ENCODE measurements at regions of chr10 and their contacts with region 1.

Region 1: GRCh38 chr10:72834183-72834825 is 59.2 kb upstream of the OIT3 start:
- DNase-seq: peak in 31 of 35 experiments; percentile 2 to 75 (median 21)
- ATAC-seq: peak in 3 of 4 experiments; percentile 50 to 66 (median 52)
- H3K4me3 ChIP-seq: no peak overlapping the region
- H3K4me3 Mint-ChIP-seq: no peak overlapping the region
- H3K27ac ChIP-seq: no peak overlapping the region
- H3K27ac Mint-ChIP-seq: no peak overlapping the region
- H3K4me1 ChIP-seq: no peaks in the 10 kb centered on the region
- H3K4me1 Mint-ChIP-seq: peaks cover 0 to 2% (median 2%) of the 10 kb centered on the region in 3 donors
- H3K27me3 ChIP-seq: no peaks in the 10 kb centered on the region
- H3K27me3 Mint-ChIP-seq: no peaks in the 10 kb centered on the region

Region 2: GRCh38 chr10:72364239-72364777 is 470.0 kb before region 1 on chr10:
- CTCF ChIA-PET with region 1: interaction called, 9 to 30 read pairs
- POLR2A ChIA-PET with region 1: interaction called, 3 to 5 read pairs
- DNase-seq: peak; percentile 67 to 91 (median 82)
- ATAC-seq: peak; percentile 98 to 99 (median 99)
- H3K4me3 ChIP-seq: peak overlapping the region in 1 of 2 donors; percentile 19
- H3K4me3 Mint-ChIP-seq: peak overlapping the region in 2 of 3 donors; percentile 25 to 56
- H3K27ac ChIP-seq: peak overlapping the region; percentile 63
- H3K27ac Mint-ChIP-seq: peak overlapping the region; percentile 80 to 91
- H3K4me1 ChIP-seq: peaks cover 0 to 23% of the 10 kb centered on the region in 2 experiments
- H3K4me1 Mint-ChIP-seq: peaks cover 15 to 21% (median 19%) of the 10 kb centered on the region in 3 donors
- H3K27me3 ChIP-seq: peaks cover 0 to 3% of the 10 kb centered on the region in 2 experiments
- H3K27me3 Mint-ChIP-seq: no peaks in the 10 kb centered on the region

Region 3: GRCh38 chr10:72875250-72876055 is 41.1 kb after region 1 on chr10:
- CTCF ChIA-PET with region 1: no interaction called
- POLR2A ChIA-PET with region 1: interaction called in 1 of 2 experiments, 14 read pairs
- DNase-seq: peak in 1 of 35 experiments; percentile 46
- ATAC-seq: no peak
- H3K4me3 ChIP-seq: no peak overlapping the region
- H3K4me3 Mint-ChIP-seq: no peak overlapping the region
- H3K27ac ChIP-seq: no peak overlapping the region
- H3K27ac Mint-ChIP-seq: no peak overlapping the region
- H3K4me1 ChIP-seq: no peaks in the 10 kb centered on the region
- H3K4me1 Mint-ChIP-seq: no peaks in the 10 kb centered on the region
- H3K27me3 ChIP-seq: no peaks in the 10 kb centered on the region
- H3K27me3 Mint-ChIP-seq: no peaks in the 10 kb centered on the region

Region 4: GRCh38 chr10:72981882-72982529 is 147.7 kb after region 1 on chr10:
- CTCF ChIA-PET with region 1: no interaction called
- POLR2A ChIA-PET with region 1: no interaction called
- DNase-seq: no peak
- ATAC-seq: no peak
- H3K4me3 ChIP-seq: no peak overlapping the region
- H3K4me3 Mint-ChIP-seq: no peak overlapping the region
- H3K27ac ChIP-seq: no peak overlapping the region
- H3K27ac Mint-ChIP-seq: no peak overlapping the region
- H3K4me1 ChIP-seq: no peaks in the 10 kb centered on the region
- H3K4me1 Mint-ChIP-seq: no peaks in the 10 kb centered on the region
- H3K27me3 ChIP-seq: peaks cover 0 to 20% of the 10 kb centered on the region in 2 experiments
- H3K27me3 Mint-ChIP-seq: peaks cover 10 to 20% of the 10 kb centered on the region in 2 donors

Region 5: DNA sequence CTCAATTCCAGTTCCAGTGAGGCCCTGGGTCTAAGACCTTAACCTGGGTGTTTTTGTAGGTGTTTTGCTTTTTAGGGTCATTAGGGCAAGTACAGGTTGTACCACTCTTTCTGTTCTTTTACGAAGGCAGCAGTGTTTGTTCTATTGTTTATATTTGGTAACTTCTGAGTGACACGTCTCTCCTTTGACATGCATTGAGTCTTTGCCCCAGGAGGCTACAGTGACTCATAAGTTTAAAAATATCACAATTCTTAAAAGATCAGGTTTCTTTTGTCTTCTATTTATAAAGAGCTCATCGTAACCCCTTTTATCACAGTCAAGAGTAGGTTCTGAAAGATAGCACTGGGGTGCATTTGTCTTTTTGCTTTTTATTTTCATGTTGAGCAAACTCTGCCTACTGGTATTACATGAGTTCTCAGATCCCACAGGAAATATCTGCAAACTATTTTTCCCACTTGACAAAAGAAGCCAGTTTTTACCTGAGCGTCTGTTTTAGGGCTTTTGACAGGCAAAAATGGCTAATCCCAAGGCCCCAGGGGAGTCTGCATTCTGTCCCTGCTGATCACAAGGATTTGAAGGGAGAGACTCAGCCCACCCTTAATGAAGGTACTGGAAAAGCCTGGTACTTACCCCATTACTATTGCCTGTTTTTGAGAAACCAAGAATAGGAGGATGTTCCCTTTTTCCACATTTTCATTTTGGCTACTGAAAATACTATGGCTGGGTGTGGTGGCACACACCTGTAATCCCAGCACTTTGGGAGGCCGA is 283.9 kb after region 1 on chr10:
- CTCF ChIA-PET with region 1: no interaction called
- POLR2A ChIA-PET with region 1: no interaction called
- DNase-seq: no peak
- ATAC-seq: no peak
- H3K4me3 ChIP-seq: no peak overlapping the region
- H3K4me3 Mint-ChIP-seq: no peak overlapping the region
- H3K27ac ChIP-seq: no peak overlapping the region
- H3K27ac Mint-ChIP-seq: no peak overlapping the region
- H3K4me1 ChIP-seq: no peaks in the 10 kb centered on the region
- H3K4me1 Mint-ChIP-seq: peaks cover 0 to 2% (median 1%) of the 10 kb centered on the region in 3 donors
- H3K27me3 ChIP-seq: no peaks in the 10 kb centered on the region
- H3K27me3 Mint-ChIP-seq: no peaks in the 10 kb centered on the region